Heart right ventricle (tissue), 16 donors: ENCODE measurements at regions of chr17 and their contacts with region 1.

Region 1: DNA sequence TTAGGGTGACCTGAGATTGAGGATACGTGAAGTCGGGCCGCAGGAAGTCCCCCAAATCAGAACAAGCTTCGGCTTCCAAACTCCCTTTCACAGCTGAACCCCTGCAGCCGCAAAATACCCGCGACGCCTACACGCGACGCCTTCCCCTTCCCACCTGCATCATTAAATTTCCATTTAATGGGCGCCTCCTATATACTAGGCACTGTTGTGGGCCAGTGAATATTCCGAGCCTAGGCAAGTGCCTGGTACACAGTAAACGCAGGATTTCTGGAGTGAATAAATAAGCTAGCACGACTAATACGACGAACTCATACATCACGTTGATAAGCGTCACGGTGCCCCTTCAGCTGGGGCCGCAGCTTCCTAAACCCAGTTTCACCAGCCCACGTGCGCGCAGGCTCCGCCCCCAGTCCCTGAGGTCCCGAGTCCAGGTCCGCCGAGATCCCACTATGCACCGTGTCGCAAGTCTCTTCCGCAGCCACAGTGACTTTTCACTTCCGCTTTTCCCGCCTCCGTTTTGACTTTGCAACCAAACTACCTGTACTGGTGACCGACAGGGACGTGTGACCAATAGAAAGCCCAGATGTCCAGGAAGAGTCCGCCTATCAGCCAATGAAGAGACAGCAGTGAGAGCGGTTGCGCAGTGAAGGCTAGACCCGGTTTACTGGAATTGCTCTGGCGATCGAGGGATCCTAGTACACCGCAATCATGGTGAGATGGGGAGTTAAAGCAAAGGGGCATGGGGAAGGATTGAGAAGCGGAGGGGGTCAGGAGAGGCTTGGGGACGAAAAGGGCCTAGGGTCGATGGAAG is at the start of gene PSMB3:
- DNase-seq: peak; percentile 94 to 99
- ATAC-seq: peak; percentile 80 to 90 (median 84)
- H3K4me3 ChIP-seq: peak within 1 kb of the TSS; percentile 69 to 99 (median 88)
- H3K27ac ChIP-seq: peak within 1 kb of the TSS; percentile 42 to 99 (median 96)
- H3K4me1 ChIP-seq: peaks cover 9 to 56% (median 43%) of the 10 kb centered on the region in 9 donors
- H3K27me3 ChIP-seq: peaks cover 0 to 36% (median 0%) of the 10 kb centered on the region in 7 donors
- CTCF ChIP-seq: no peak
- total RNA-seq, gene PSMB3: 148 to 220 (median 162) TPM

Region 2: GRCh38 chr17:38628441-38628840 is 123.9 kb before region 1 on chr17:
- intact Hi-C with region 1: no loop called
- DNase-seq: no peak
- ATAC-seq: no peak
- H3K4me3 ChIP-seq: no peak overlapping the region
- H3K27ac ChIP-seq: no peak overlapping the region
- H3K4me1 ChIP-seq: no peaks in the 10 kb centered on the region
- H3K27me3 ChIP-seq: peaks cover 0 to 21% (median 8%) of the 10 kb centered on the region in 7 donors
- CTCF ChIP-seq: no peak

Region 3: DNA sequence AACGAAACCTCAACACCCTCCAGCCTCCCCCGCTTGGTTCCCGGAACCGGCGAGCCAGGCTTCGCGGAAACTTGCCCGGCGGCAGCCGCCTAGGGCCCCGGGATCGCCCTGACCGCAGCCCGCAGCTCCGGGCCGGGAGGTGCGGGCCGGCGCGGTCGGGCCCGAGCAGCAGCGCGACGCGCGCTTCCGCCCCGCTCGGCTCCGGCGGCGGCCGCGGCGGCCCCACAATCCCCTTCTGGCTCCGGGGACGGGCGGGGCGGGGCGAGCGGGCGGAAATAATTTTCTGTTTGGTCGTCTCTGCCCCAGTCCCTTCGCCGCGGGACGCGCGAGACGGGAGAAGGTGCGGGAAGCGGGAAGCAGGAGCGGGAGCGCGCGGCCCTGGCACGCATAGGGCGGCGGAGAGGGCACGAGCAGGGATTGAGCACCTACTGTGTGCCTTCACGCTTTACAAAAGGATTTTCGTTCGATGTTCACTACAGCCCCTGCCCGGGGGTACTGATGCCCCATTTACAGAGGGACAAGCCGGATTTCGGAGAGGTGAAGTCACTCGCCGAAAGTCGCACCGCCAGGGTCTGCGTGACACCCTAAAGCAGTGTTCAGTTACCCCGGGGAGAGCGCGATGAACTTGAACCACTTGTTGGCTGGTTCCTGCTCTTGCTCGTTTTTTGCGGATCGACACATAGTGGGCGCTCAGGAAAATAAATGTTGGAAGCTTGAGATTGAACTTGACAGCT is 50.0 kb before region 1 on chr17:
- intact Hi-C with region 1: loop called in 2 of 10 experiments (anchors 2 to 5 kb)
- DNase-seq: peak; percentile 90 to 91
- ATAC-seq: peak; percentile 66 to 78 (median 72)
- H3K4me3 ChIP-seq: peak overlapping the region; percentile 60 to 96 (median 90)
- H3K27ac ChIP-seq: peak overlapping the region; percentile 72 to 100 (median 98)
- H3K4me1 ChIP-seq: peaks cover 8 to 66% (median 31%) of the 10 kb centered on the region in 9 donors
- H3K27me3 ChIP-seq: no peaks in the 10 kb centered on the region
- CTCF ChIP-seq: no peak

Region 4: GRCh38 chr17:38799378-38800236 is 47.3 kb after region 1 on chr17 and contains the start of gene PIP4K2B:
- intact Hi-C with region 1: loop called in 3 of 10 experiments (anchors 2 to 5 kb)
- DNase-seq: peak; percentile 95 to 97
- ATAC-seq: peak; percentile 95 to 98 (median 95)
- H3K4me3 ChIP-seq: peak within 1 kb of the TSS; percentile 76 to 99 (median 94)
- H3K27ac ChIP-seq: peak within 1 kb of the TSS; percentile 98 to 100 (median 100)
- H3K4me1 ChIP-seq: peaks cover 7 to 42% (median 34%) of the 10 kb centered on the region in 9 donors
- H3K27me3 ChIP-seq: no peaks in the 10 kb centered on the region
- CTCF ChIP-seq: peak in 1 of 9 donors; percentile 23
- total RNA-seq, gene PIP4K2B: 37.9 to 51.9 (median 47.5) TPM

Region 5: GRCh38 chr17:38853292-38854219 is 101.2 kb after region 1 on chr17 and contains the start of gene RPL23:
- intact Hi-C with region 1: loop called in 1 of 10 experiments (anchors 10 kb)
- DNase-seq: peak; percentile 90 to 98
- ATAC-seq: peak; percentile 95 to 99 (median 98)
- H3K4me3 ChIP-seq: peak within 1 kb of the TSS; percentile 48 to 83 (median 67)
- H3K27ac ChIP-seq: peak within 1 kb of the TSS; percentile 81 to 98 (median 92)
- H3K4me1 ChIP-seq: peaks cover 12 to 43% (median 32%) of the 10 kb centered on the region in 9 donors
- H3K27me3 ChIP-seq: no peaks in the 10 kb centered on the region
- CTCF ChIP-seq: no peak
- total RNA-seq, gene RPL23: 725 to 991 (median 835) TPM